OCI-LY7 (cell line): ENCODE measurements at regions of chr1 and their contacts with region 1.

Region 1: GRCh38 chr1:168887381-168887780 is 158.4 kb upstream of the DPT start:
- DNase-seq: no peak
- H3K4me3 ChIP-seq: no peak overlapping the region
- H3K27ac ChIP-seq: no peak overlapping the region
- H3K4me1 ChIP-seq: no peaks in the 10 kb centered on the region
- CTCF ChIP-seq: no peak

Region 2: GRCh38 chr1:168939548-168940245 is 52.3 kb after region 1 on chr1:
- CTCF ChIA-PET with region 1: no interaction called
- POLR2A ChIA-PET with region 1: no interaction called
- intact Hi-C with region 1: loop called (anchors 5 kb)
- DNase-seq: no peak
- H3K4me3 ChIP-seq: no peak overlapping the region
- H3K27ac ChIP-seq: no peak overlapping the region
- H3K4me1 ChIP-seq: no peaks in the 10 kb centered on the region
- CTCF ChIP-seq: no peak